ENCODE measurements at regions of chr2 and their contacts with region 1.

Region 1: DNA sequence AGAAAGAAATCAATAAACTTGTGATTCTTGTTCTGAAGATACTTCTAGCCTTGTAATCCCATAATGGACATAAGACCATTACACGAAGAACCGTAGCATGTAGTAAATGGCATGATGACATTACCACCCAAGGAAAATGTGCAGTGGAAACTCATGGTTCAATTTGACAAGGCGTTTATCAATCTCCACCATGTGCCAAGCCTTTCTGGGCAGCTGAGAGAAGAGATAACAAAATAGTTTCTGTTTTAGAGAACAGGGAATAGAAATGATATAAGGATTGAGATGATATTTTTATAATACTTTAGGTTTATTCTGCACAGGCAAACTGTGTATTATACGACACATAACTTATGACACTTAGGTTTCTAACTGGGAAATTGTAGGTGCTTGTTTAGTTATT is 19.2 kb downstream of the ABI2 start:
- DNase-seq: no peak
- H3K4me3 ChIP-seq: no peak overlapping the region
- H3K27ac ChIP-seq: no peak overlapping the region
- H3K4me1 ChIP-seq: peaks cover 7% of the 10 kb centered on the region
- H3K27me3 ChIP-seq: no peaks in the 10 kb centered on the region
- CTCF ChIP-seq: no peak

Region 2: DNA sequence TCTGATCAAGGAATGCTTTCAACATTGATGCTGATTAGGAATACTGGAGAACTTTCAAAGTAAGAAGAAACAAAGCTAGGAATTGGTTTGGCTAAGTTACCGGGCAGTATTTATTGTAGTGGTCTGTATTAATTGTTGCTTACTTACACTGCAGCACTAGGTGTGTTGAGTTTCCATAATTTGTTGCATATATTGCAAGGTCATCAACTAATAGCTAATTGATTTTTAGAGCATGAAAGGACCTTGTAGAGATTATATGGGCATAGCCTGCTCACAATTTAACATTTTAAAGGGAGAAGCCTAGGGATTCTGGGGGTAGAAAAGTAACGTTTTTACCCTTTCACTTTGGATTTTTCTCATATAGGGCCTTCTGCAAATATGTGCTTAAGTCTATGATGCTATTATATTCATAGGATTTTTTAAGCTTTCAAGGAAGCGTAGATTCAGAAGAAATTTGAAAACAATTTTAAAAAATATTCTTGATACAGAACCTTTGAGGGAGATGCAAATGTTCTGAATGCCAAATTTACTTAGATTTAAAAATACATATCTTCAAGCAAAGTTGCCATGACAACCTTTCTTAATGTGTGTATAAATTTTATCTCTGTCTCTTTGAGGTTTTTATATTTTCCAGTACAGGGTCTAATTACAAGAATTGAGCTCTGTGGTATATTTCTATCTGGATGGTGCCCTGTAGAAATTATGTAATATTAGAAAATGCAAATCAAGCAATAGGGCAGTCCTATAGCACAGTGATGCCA is 36.5 kb before region 1 on chr2:
- CTCF ChIA-PET with region 1: no interaction called
- dilution Hi-C with region 1: loop called (anchors 5 kb)
- in situ Hi-C with region 1: no loop called
- intact Hi-C with region 1: no loop called
- DNase-seq: no peak
- H3K4me3 ChIP-seq: no peak overlapping the region
- H3K27ac ChIP-seq: no peak overlapping the region
- H3K4me1 ChIP-seq: no peaks in the 10 kb centered on the region
- H3K27me3 ChIP-seq: no peaks in the 10 kb centered on the region
- CTCF ChIP-seq: no peak

Region 3: DNA sequence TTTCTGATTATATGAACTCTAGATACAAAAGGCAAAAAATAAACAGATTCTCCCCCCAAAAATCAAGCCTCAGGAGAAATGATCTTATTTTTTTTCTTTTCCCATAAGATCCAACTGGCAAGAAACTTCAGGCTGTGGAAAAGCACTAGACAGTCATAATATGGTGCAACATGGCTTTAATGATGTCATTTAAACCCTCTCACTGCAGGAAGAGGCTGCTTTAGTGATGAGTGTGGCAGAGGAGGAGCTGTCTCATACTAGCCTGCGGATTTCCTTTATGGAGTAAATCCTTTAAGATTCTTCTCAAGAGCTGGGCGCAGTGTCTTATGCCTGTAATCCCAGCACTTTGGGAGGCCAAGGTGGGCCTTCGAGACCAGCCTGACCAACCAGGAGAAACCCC is 275.7 kb after region 1 on chr2:
- CTCF ChIA-PET with region 1: no interaction called
- dilution Hi-C with region 1: no loop called
- in situ Hi-C with region 1: no loop called
- intact Hi-C with region 1: no loop called
- DNase-seq: peak; percentile 80
- H3K4me3 ChIP-seq: no peak overlapping the region
- H3K27ac ChIP-seq: no peak overlapping the region
- H3K4me1 ChIP-seq: no peaks in the 10 kb centered on the region
- H3K27me3 ChIP-seq: no peaks in the 10 kb centered on the region
- CTCF ChIP-seq: no peak

Measured in mammary epithelial cell (primary cell).